SK-N-SH (cell line): ENCODE measurements at regions of chr4 and their contacts with region 1.

Region 1: GRCh38 chr4:52983563-52984303 is 121.6 kb downstream of the RASL11B start:
- DNase-seq: peak; percentile 49
- H3K4me3 ChIP-seq: no peak overlapping the region; a peak in 1 of 4 replicates
- H3K27ac ChIP-seq: peak overlapping the region in 1 of 2 experiments; percentile 80; a peak in 2 of 4 replicates
- H3K4me1 ChIP-seq: peaks cover 0 to 42% of the 10 kb centered on the region in 2 experiments; a peak in 2 of 4 replicates
- H3K27me3 ChIP-seq: no peaks in the 10 kb centered on the region
- CTCF ChIP-seq: peak; percentile 81
- EP300 ChIP-seq: no peak
- RAD21 ChIP-seq: peak; percentile 77

Region 2: GRCh38 chr4:52376132-52376704 is 607.5 kb before region 1 on chr4:
- CTCF ChIA-PET with region 1: interaction called, 76 read pairs
- POLR2A ChIA-PET with region 1: no interaction called
- DNase-seq: peak; percentile 41
- H3K4me3 ChIP-seq: peak overlapping the region in 1 of 2 experiments; percentile 32; a peak in 1 of 4 replicates
- H3K27ac ChIP-seq: no peak overlapping the region
- H3K4me1 ChIP-seq: peaks cover 0 to 3% of the 10 kb centered on the region in 2 experiments; a peak in 1 of 4 replicates
- H3K27me3 ChIP-seq: no peaks in the 10 kb centered on the region
- CTCF ChIP-seq: peak; percentile 80
- EP300 ChIP-seq: no peak
- RAD21 ChIP-seq: peak; percentile 86

Region 3: GRCh38 chr4:52712172-52712990 is 271.4 kb before region 1 on chr4:
- CTCF ChIA-PET with region 1: interaction called, 26 read pairs
- POLR2A ChIA-PET with region 1: interaction called, 3 read pairs
- DNase-seq: peak; percentile 98
- H3K4me3 ChIP-seq: peak overlapping the region; percentile 89
- H3K27ac ChIP-seq: peak overlapping the region; percentile 34 to 85; a peak in 3 of 4 replicates
- H3K4me1 ChIP-seq: peaks cover 10 to 33% of the 10 kb centered on the region in 2 experiments; a peak in 2 of 4 replicates
- H3K27me3 ChIP-seq: no peaks in the 10 kb centered on the region
- CTCF ChIP-seq: no peak
- EP300 ChIP-seq: no peak
- RAD21 ChIP-seq: no peak

Region 4: DNA sequence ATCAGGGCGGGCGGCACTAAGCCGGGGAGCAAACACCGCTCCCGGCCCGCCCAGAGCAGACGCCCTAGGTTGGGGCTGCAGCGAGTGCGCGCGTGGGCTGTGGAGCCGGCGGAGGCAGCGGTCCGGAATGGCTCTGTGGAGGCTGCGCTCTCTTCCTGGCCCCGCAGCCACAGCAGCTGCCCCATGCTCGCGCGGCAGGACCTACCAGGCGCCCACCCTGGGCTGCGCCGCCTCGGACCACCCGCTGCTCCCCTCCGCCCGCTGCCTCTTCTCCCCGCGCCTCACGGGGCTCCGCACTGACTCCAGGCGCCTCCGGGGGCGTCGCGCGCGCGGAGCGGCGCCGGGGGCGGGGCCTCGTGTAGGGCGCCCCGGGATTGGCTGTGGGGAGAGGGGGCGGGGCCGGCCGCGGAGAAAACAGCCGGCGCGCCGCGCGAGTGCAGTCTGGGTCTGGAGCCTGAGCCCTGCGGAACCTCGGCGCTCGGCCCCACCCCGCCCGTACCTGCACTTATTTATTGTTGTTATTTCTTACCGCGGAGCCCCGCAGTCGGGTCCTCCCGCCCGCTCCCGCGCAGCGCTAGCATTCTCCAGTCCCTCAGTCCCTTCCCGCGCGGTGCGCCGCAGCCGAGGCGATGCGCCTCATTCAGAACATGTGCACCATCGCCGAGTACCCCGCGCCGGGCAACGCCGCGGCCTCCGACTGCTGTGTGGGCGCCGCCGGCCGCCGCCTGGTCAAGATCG is 121.7 kb before region 1 on chr4 and contains the start of gene RASL11B:
- CTCF ChIA-PET with region 1: interaction called, 55 read pairs
- POLR2A ChIA-PET with region 1: no interaction called
- DNase-seq: peak; percentile 98
- H3K4me3 ChIP-seq: peak within 1 kb of the TSS; percentile 71 to 73
- H3K27ac ChIP-seq: peak within 1 kb of the TSS in 1 of 2 experiments; percentile 100; a peak in 2 of 4 replicates
- H3K4me1 ChIP-seq: peaks cover 0 to 31% of the 10 kb centered on the region in 2 experiments; a peak in 2 of 4 replicates
- H3K27me3 ChIP-seq: no peaks in the 10 kb centered on the region; the same call in 1 of the 2 replicates
- CTCF ChIP-seq: peak; percentile 15; the same call in 1 of the 2 replicates
- EP300 ChIP-seq: no peak
- RAD21 ChIP-seq: no peak; the same call in none of the 2 replicates
- polyA plus RNA-seq, gene RASL11B: 0.54 and 1.2 TPM in 2 replicates

Region 5: GRCh38 chr4:52957220-52957686 is 26.5 kb before region 1 on chr4:
- CTCF ChIA-PET with region 1: interaction called, 23 read pairs
- POLR2A ChIA-PET with region 1: no interaction called
- DNase-seq: peak; percentile 40
- H3K4me3 ChIP-seq: no peak overlapping the region
- H3K27ac ChIP-seq: peak overlapping the region in 1 of 2 experiments; percentile 70; a peak in 2 of 4 replicates
- H3K4me1 ChIP-seq: peaks cover 0 to 48% of the 10 kb centered on the region in 2 experiments; a peak in 2 of 4 replicates
- H3K27me3 ChIP-seq: no peaks in the 10 kb centered on the region
- CTCF ChIP-seq: no peak
- EP300 ChIP-seq: peak in 1 of 2 experiments; percentile 60; a peak in 2 of 4 replicates
- RAD21 ChIP-seq: 0 out of 2 replicates have a peak, but pooled peaks have one; percentile 12

Region 6: GRCh38 chr4:54228056-54228527 is 1244.4 kb after region 1 on chr4:
- CTCF ChIA-PET with region 1: interaction called, 37 read pairs
- POLR2A ChIA-PET with region 1: no interaction called
- DNase-seq: peak; percentile 87
- H3K4me3 ChIP-seq: peak overlapping the region; percentile 64 to 85
- H3K27ac ChIP-seq: peak overlapping the region; percentile 79 to 90; a peak in 3 of 4 replicates
- H3K4me1 ChIP-seq: peaks cover 0 to 20% of the 10 kb centered on the region in 2 experiments; a peak in 2 of 4 replicates
- H3K27me3 ChIP-seq: no peaks in the 10 kb centered on the region
- CTCF ChIP-seq: peak; percentile 88
- EP300 ChIP-seq: no peak
- RAD21 ChIP-seq: peak; percentile 91